Heart right ventricle (tissue), 16 donors: ENCODE measurements at regions of chr11 and their contacts with region 1.

Region 1: DNA sequence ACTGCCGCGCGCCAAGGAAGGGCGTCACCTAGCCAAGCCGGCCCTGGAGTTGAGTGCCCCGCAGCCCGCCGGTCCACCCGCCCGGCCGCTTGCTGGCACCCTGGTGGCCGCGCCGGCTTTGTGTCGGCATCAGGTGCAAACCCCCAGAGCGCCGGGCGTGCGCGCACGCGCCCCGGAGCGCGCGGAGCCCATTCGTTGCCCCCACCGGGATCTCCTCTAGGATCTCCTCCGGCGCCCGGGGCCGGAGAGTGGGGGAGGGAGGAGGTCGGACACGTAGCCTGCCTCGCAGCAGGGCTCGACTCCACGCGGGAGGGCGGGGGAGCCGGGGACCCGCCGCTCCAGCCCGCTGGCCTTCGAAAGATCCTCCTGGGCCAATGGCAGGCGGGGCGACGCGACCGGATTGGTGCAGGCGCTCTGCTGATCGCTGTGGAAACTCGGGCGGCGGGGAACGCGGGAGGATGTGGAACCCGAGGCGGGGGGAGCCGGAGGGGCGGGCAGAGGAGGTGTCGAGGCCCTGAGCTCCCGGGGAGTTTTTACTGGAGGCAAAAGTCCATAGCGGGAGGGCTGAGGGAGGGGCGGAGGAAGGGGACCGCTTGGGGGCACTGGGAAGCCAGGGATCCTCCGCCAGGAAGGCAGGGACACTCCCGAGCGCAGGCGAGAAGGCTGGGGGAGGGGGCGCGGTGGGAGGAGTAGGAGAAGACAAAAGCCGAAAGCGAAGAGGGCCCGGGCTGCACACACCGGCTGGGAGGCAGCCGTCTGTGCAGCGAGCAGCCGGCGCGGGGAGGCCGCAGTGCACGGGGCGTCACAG is at the start of gene FADS2:
- DNase-seq: peak; percentile 93 to 94
- ATAC-seq: peak; percentile 84 to 92 (median 88)
- H3K4me3 ChIP-seq: peak within 1 kb of the TSS; percentile 44 to 86 (median 73)
- H3K27ac ChIP-seq: peak within 1 kb of the TSS; percentile 40 to 95 (median 86)
- H3K4me1 ChIP-seq: peaks cover 12 to 57% (median 43%) of the 10 kb centered on the region in 9 donors
- H3K27me3 ChIP-seq: peaks cover 0 to 11% (median 0%) of the 10 kb centered on the region in 7 donors
- CTCF ChIP-seq: peak in 1 of 9 donors; percentile 30
- total RNA-seq, gene FADS2: 15.1 to 37.0 (median 23.5) TPM

Region 2: GRCh38 chr11:61860054-61860903 is 32.5 kb after region 1 on chr11:
- intact Hi-C with region 1: loop called in 1 of 10 experiments (anchors 5 kb)
- DNase-seq: peak; percentile 81 to 83
- ATAC-seq: peak; percentile 45 to 82 (median 72)
- H3K4me3 ChIP-seq: no peak overlapping the region
- H3K27ac ChIP-seq: peak overlapping the region in 8 of 10 donors; percentile 38 to 88 (median 68)
- H3K4me1 ChIP-seq: peaks cover 6 to 27% (median 14%) of the 10 kb centered on the region in 9 donors
- H3K27me3 ChIP-seq: no peaks in the 10 kb centered on the region
- CTCF ChIP-seq: no peak

Region 3: DNA sequence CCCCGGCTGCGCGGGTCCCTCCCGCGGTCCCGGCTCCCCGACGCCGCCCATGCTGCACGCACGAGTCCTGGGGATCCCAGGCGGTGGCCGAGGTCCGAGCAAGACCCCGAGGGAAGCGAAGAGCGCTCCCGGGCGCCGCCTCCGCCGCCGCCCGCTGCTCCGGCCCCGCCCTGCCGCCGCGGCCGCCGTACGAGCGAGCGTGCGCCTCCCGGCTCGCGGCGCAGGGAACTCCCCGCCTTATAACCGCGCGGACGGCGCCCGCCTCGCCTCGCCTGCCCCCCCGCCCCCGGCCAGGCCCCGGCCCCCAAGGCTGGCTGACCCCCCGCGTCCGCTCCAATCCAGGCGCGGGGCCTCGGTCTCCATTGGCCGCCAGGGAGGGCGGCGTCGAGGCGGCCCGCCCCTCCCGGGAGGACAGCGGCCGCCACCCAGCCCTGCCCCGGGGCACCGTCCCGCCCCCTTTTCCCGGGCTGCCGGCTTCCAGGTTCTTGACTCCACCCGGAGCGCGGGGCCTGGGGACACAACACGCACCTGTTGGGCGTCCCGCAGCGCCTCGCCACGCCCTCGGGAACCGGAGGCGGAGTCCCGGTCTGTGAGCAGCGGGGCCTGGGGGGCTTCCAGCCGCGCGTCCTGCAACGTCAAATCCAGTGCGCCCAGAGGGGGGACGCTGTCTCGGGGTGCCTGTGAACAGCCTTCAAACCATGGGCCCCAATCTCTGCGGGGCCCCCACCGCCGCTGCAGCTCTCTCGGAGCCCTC is 63.7 kb after region 1 on chr11 and contains the start of gene FADS3:
- intact Hi-C with region 1: loop called in 1 of 10 experiments (anchors 2 kb)
- DNase-seq: peak; percentile 88 to 92
- ATAC-seq: peak; percentile 85 to 91 (median 87)
- H3K4me3 ChIP-seq: peak within 1 kb of the TSS; percentile 63 to 98 (median 93)
- H3K27ac ChIP-seq: peak within 1 kb of the TSS; percentile 84 to 98 (median 96)
- H3K4me1 ChIP-seq: peaks cover 14 to 58% (median 41%) of the 10 kb centered on the region in 9 donors
- H3K27me3 ChIP-seq: no peaks in the 10 kb centered on the region
- CTCF ChIP-seq: peak in 3 of 9 donors; percentile 3 to 29 (median 22)
- total RNA-seq, gene FADS3: 54.9 to 119 (median 71.1) TPM